Activated CD4-positive, alpha-beta memory T cell treated with anti-CD3 and anti-CD28 coated beads, Interleukin-2, amount 10 ng/mL, durations not matched to agents 7 days and 5 days (primary cell): ENCODE measurements at regions of chr11 and their contacts with region 1.

Region 1: GRCh38 chr11:78416305-78417178 is 1.1 kb downstream of the GAB2 start:
- DNase-seq: peak; percentile 86
- H3K4me3 Mint-ChIP-seq: peak overlapping the region; percentile 95
- H3K27ac Mint-ChIP-seq: peak overlapping the region; percentile 84
- H3K4me1 Mint-ChIP-seq: peaks cover 66% of the 10 kb centered on the region
- H3K27me3 Mint-ChIP-seq: peaks cover 18% of the 10 kb centered on the region

Region 2: GRCh38 chr11:78079232-78080083 is 337.1 kb before region 1 on chr11 and contains the start of gene NDUFC2:
- CTCF ChIA-PET with region 1: no interaction called
- POLR2A ChIA-PET with region 1: interaction called, 16 read pairs
- DNase-seq: peak; percentile 77
- H3K4me3 Mint-ChIP-seq: peak within 1 kb of the TSS; percentile 94
- H3K27ac Mint-ChIP-seq: peak within 1 kb of the TSS; percentile 88
- H3K4me1 Mint-ChIP-seq: peaks cover 51% of the 10 kb centered on the region
- H3K27me3 Mint-ChIP-seq: no peaks in the 10 kb centered on the region
- total RNA-seq, gene NDUFC2: 204 to 210 TPM

Region 3: DNA sequence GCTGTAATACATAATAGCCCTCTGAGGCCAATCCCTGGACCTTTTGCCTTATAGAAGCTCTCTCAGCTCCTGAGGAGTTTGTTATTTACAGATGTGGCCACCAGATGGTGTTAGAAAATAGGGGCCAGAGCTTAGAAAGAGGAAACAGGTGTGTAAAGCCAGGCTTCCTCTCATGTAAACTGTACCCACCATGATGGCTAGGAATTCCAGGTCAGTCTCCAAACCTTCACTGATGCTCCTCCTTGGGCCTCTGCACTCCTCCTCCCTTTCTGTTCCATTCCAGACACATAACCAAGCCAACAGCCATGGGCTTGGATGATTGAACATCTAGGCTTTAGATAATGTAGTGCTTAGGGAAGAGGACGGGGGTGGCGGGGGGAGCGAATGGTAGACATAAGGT is 188.1 kb before region 1 on chr11:
- CTCF ChIA-PET with region 1: interaction called, 14 read pairs
- POLR2A ChIA-PET with region 1: interaction called, 17 read pairs
- DNase-seq: peak; percentile 25
- H3K4me3 Mint-ChIP-seq: no peak overlapping the region
- H3K27ac Mint-ChIP-seq: no peak overlapping the region
- H3K4me1 Mint-ChIP-seq: peaks cover 58% of the 10 kb centered on the region
- H3K27me3 Mint-ChIP-seq: no peaks in the 10 kb centered on the region

Region 4: DNA sequence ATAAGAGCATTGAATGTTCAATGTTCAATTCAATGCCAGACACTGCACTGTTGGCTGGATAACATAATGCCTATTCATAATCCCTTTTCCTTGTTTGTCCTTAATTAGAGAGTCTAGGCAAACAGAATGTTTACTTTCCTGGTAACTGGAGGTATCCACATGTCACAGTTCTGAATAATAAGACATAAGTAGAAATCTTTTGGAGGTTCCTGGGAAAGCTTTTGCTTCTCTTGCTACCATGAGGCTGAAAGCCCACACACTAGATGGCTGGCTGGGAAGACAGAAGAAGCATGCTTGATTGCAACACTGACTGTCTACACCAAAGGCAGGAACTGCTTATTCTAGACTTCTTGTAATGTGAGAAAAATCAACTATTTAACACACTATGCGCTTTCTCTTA is 78.4 kb before region 1 on chr11:
- CTCF ChIA-PET with region 1: interaction called, 5 read pairs
- POLR2A ChIA-PET with region 1: interaction called, 17 read pairs
- DNase-seq: no peak
- H3K4me3 Mint-ChIP-seq: no peak overlapping the region
- H3K27ac Mint-ChIP-seq: peak overlapping the region; percentile 89
- H3K4me1 Mint-ChIP-seq: peaks cover 88% of the 10 kb centered on the region
- H3K27me3 Mint-ChIP-seq: no peaks in the 10 kb centered on the region

Region 5: GRCh38 chr11:78453140-78453935 is 36.8 kb after region 1 on chr11:
- CTCF ChIA-PET with region 1: interaction called, 3 read pairs
- POLR2A ChIA-PET with region 1: interaction called, 13 read pairs
- DNase-seq: no peak
- H3K4me3 Mint-ChIP-seq: no peak overlapping the region
- H3K27ac Mint-ChIP-seq: peak overlapping the region; percentile 41
- H3K4me1 Mint-ChIP-seq: peaks cover 25% of the 10 kb centered on the region
- H3K27me3 Mint-ChIP-seq: no peaks in the 10 kb centered on the region

Region 6: GRCh38 chr11:78564490-78565467 is 148.2 kb after region 1 on chr11:
- CTCF ChIA-PET with region 1: interaction called, 85 read pairs
- POLR2A ChIA-PET with region 1: interaction called, 40 read pairs
- DNase-seq: peak; percentile 44
- H3K4me3 Mint-ChIP-seq: no peak overlapping the region
- H3K27ac Mint-ChIP-seq: peak overlapping the region; percentile 71
- H3K4me1 Mint-ChIP-seq: peaks cover 50% of the 10 kb centered on the region
- H3K27me3 Mint-ChIP-seq: no peaks in the 10 kb centered on the region